A673 (cell line): ENCODE measurements at regions of chr18 and their contacts with region 1.

Region 1: DNA sequence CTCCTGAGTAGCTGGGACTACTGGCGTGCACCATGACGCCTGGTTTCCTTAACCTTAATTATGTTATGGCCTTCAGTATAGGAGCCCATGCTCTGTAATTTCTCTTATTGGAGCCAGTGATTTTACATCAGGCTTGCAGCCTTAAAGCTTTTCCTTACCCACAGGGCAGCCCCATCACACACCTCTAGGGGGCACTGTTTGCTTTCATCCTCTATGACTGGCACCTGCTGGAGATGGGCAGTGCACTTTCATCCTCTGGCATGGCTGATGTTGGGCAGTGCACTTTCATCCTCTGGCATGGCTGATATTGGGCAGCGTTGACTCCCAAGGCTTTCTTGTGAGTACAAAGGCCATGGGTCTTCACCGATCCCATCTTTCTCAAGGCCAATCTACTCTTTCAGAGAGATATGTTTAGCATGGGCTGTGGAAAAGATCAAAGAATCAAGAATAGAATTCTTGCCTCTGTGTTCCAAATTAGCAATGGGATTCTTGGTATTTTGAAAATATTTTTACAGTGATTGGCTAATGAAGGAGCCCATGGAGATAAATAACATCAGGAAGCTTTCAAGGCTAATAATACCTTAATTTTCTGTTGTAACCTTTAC is 80.7 kb upstream of the MEX3C start:
- DNase-seq: peak; percentile 73
- H3K4me3 ChIP-seq: no peak overlapping the region
- H3K27ac ChIP-seq: no peak overlapping the region
- H3K4me1 ChIP-seq: peaks cover 14% of the 10 kb centered on the region
- H3K27me3 ChIP-seq: no peaks in the 10 kb centered on the region
- CTCF ChIP-seq: peak; percentile 90

Region 2: DNA sequence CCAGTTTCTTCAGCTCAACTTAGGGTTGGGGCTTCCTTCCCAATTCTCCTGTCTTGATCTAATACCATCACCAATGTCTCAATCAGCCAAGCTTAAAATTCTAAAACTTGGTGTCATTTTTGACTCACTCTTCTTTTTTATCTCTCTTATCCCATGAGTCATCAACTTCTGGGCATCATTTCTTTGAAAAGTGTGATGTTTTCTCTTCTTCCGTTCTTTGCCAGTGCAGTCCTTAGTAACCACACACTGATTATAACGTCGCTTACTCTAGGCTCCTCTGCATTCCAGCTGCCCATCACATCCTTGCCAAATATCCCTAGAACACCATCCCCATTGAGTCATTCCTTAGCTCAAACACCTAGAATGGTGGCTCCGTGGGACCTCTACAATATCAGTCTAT is 431.0 kb before region 1 on chr18:
- CTCF ChIA-PET with region 1: no interaction called
- POLR2A ChIA-PET with region 1: no interaction called
- intact Hi-C with region 1: no loop called
- DNase-seq: no peak
- H3K4me3 ChIP-seq: no peak overlapping the region
- H3K27ac ChIP-seq: no peak overlapping the region
- H3K4me1 ChIP-seq: no peaks in the 10 kb centered on the region
- H3K27me3 ChIP-seq: no peaks in the 10 kb centered on the region
- CTCF ChIP-seq: no peak

Region 3: GRCh38 chr18:51110073-51110803 is 167.9 kb before region 1 on chr18:
- CTCF ChIA-PET with region 1: interaction called, 5 read pairs
- POLR2A ChIA-PET with region 1: no interaction called
- intact Hi-C with region 1: loop called (anchors 10 kb)
- DNase-seq: peak; percentile 73
- H3K4me3 ChIP-seq: peak overlapping the region; percentile 21
- H3K27ac ChIP-seq: no peak overlapping the region
- H3K4me1 ChIP-seq: no peaks in the 10 kb centered on the region
- H3K27me3 ChIP-seq: no peaks in the 10 kb centered on the region
- CTCF ChIP-seq: peak; percentile 89

Region 4: DNA sequence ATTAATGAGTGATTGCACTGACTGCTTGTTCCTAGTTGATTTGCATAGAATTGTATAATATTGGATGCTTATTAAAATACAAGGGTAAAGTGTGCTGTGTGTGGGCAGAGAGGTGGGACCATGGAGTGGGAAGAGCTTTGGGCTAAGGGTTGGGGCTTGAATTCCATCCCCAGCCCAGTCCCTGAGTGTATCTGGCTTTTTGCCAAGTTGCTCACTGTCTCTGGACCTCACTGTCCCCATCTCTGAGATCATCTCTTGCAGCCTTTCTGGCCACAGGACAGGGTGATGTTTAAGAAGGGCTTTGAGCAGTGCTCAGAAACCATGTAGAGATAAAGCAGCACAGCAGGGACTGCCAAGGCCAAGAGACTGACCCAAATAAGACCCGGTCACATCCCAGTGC is 46.8 kb after region 1 on chr18:
- CTCF ChIA-PET with region 1: no interaction called
- POLR2A ChIA-PET with region 1: no interaction called
- intact Hi-C with region 1: loop called (anchors 1 kb)
- DNase-seq: no peak
- H3K4me3 ChIP-seq: no peak overlapping the region
- H3K27ac ChIP-seq: peak overlapping the region; percentile 12
- H3K4me1 ChIP-seq: peaks cover 45% of the 10 kb centered on the region
- H3K27me3 ChIP-seq: no peaks in the 10 kb centered on the region
- CTCF ChIP-seq: no peak

Region 5: GRCh38 chr18:51461956-51462355 is 183.8 kb after region 1 on chr18:
- CTCF ChIA-PET with region 1: no interaction called
- POLR2A ChIA-PET with region 1: no interaction called
- intact Hi-C with region 1: no loop called
- DNase-seq: no peak
- H3K4me3 ChIP-seq: no peak overlapping the region
- H3K27ac ChIP-seq: no peak overlapping the region
- H3K4me1 ChIP-seq: no peaks in the 10 kb centered on the region
- H3K27me3 ChIP-seq: no peaks in the 10 kb centered on the region
- CTCF ChIP-seq: no peak